A673 (cell line): ENCODE measurements at regions of chr16 and their contacts with region 1.

Region 1: GRCh38 chr16:75764154-75764768 is 38.0 kb upstream of the CPHXL start:
- DNase-seq: peak; percentile 69
- H3K4me3 ChIP-seq: no peak overlapping the region
- H3K27ac ChIP-seq: no peak overlapping the region
- H3K4me1 ChIP-seq: no peaks in the 10 kb centered on the region
- H3K27me3 ChIP-seq: no peaks in the 10 kb centered on the region
- CTCF ChIP-seq: peak; percentile 89

Region 2: GRCh38 chr16:75402821-75403475 is 361.3 kb before region 1 on chr16:
- CTCF ChIA-PET with region 1: no interaction called
- POLR2A ChIA-PET with region 1: no interaction called
- intact Hi-C with region 1: loop called (anchors 10 kb)
- DNase-seq: peak; percentile 65
- H3K4me3 ChIP-seq: no peak overlapping the region
- H3K27ac ChIP-seq: no peak overlapping the region
- H3K4me1 ChIP-seq: peaks cover 9% of the 10 kb centered on the region
- H3K27me3 ChIP-seq: no peaks in the 10 kb centered on the region
- CTCF ChIP-seq: peak; percentile 81

Region 3: GRCh38 chr16:75471723-75472633 is 292.3 kb before region 1 on chr16:
- CTCF ChIA-PET with region 1: interaction called, 5 read pairs
- POLR2A ChIA-PET with region 1: no interaction called
- intact Hi-C with region 1: loop called (anchors 1 kb)
- DNase-seq: peak; percentile 70
- H3K4me3 ChIP-seq: no peak overlapping the region
- H3K27ac ChIP-seq: no peak overlapping the region
- H3K4me1 ChIP-seq: no peaks in the 10 kb centered on the region
- H3K27me3 ChIP-seq: no peaks in the 10 kb centered on the region
- CTCF ChIP-seq: peak; percentile 88

Region 4: DNA sequence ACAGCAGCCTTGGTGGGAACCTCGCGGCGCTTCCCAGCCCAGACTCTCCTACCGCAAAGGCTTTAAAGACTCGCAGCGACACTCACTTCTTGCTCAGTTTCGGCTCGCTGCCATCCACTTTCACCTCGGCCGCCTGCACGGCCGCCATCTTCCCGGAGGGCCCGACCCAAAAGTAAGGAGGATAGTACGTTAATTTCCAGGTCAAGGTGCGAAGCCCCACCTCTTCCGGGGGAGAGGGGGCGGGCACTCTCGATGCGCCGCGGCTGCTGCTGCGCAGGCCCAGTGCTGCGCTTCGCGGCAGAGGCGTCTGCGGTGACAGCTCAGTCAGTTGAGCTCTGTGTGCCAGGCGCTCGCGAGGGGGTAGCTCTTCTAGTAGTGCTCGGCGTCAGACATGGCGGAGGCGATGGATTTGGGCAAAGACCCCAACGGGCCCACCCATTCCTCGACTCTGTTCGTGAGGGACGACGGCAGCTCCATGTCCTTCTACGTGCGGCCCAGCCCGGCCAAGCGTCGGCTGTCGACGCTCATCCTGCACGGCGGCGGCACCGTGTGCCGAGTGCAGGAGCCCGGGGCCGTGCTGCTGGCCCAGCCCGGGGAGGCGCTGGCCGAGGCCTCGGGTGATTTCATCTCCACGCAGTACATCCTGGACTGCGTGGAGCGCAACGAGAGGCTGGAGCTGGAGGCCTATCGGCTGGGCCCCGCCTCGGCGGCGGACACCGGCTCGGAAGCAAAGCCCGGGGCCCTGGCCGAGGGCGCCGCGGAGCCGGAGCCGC is 116.6 kb before region 1 on chr16 and contains the starts of genes KARS1 and TERF2IP:
- CTCF ChIA-PET with region 1: no interaction called
- POLR2A ChIA-PET with region 1: no interaction called
- intact Hi-C with region 1: loop called (anchors 5 kb)
- DNase-seq: peak; percentile 96
- H3K4me3 ChIP-seq: peak within 1 kb of the TSS; percentile 95
- H3K27ac ChIP-seq: peak within 1 kb of the TSS; percentile 86
- H3K4me1 ChIP-seq: peaks cover 27% of the 10 kb centered on the region
- H3K27me3 ChIP-seq: no peaks in the 10 kb centered on the region
- CTCF ChIP-seq: no peak
- total RNA-seq, gene KARS1: 244 and 253 TPM in 2 replicates
- total RNA-seq, gene TERF2IP: 43.0 and 48.5 TPM in 2 replicates

Region 5: GRCh38 chr16:75660726-75661302 is 103.4 kb before region 1 on chr16:
- CTCF ChIA-PET with region 1: no interaction called
- POLR2A ChIA-PET with region 1: no interaction called
- intact Hi-C with region 1: no loop called
- DNase-seq: no peak
- H3K4me3 ChIP-seq: no peak overlapping the region
- H3K27ac ChIP-seq: no peak overlapping the region
- H3K4me1 ChIP-seq: no peaks in the 10 kb centered on the region
- H3K27me3 ChIP-seq: no peaks in the 10 kb centered on the region
- CTCF ChIP-seq: no peak

Region 6: GRCh38 chr16:75727221-75727620 is 37.0 kb before region 1 on chr16:
- CTCF ChIA-PET with region 1: no interaction called
- POLR2A ChIA-PET with region 1: no interaction called
- intact Hi-C with region 1: no loop called
- DNase-seq: no peak
- H3K4me3 ChIP-seq: no peak overlapping the region
- H3K27ac ChIP-seq: no peak overlapping the region
- H3K4me1 ChIP-seq: no peaks in the 10 kb centered on the region
- H3K27me3 ChIP-seq: no peaks in the 10 kb centered on the region
- CTCF ChIP-seq: no peak